ENCODE measurements at regions of chr2 and their contacts with region 1.

Region 1: GRCh38 chr2:10688921-10689807 is 611 bp downstream of the NOL10 start:
- DNase-seq: peak; percentile 21
- H3K4me3 ChIP-seq: peak overlapping the region; percentile 100
- H3K27ac ChIP-seq: peak overlapping the region; percentile 53
- H3K4me1 ChIP-seq: peaks cover 23% of the 10 kb centered on the region
- CTCF ChIP-seq: no peak

Region 2: DNA sequence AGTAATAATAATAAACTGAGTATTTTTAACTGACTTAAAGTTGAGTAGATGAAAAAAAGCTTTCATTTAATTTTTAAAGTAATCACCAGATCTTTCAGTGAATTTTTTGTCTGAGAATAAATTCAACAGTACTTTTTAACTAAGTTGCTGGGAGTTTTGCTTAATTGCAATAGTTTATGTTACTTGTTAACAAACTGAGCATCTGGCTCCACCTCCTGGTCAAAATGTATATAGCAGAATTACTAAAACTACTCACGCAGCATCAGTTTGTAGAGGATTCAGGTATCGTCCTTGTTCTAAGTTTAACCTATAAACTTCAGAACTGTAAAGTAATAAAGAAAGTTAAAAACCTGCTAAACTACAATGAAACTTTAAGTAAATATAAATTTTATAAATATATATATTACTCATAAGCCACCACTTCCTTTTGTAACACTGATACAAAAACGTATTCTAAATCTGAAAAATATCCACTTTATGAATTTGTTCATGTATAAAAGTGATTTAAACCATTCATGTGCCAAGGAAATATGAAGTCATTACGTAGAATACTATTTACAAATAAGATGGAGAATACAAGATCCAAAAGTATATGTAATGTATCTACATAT is 20.7 kb before region 1 on chr2:
- CTCF ChIA-PET with region 1: no interaction called
- POLR2A ChIA-PET with region 1: no interaction called
- intact Hi-C with region 1: no loop called
- DNase-seq: peak; percentile 75
- H3K4me3 ChIP-seq: no peak overlapping the region
- H3K27ac ChIP-seq: no peak overlapping the region
- H3K4me1 ChIP-seq: no peaks in the 10 kb centered on the region
- CTCF ChIP-seq: peak; percentile 92

Region 3: GRCh38 chr2:10812362-10813162 is 123.4 kb after region 1 on chr2 and contains the start of gene PDIA6:
- CTCF ChIA-PET with region 1: no interaction called
- POLR2A ChIA-PET with region 1: interaction called, 3 read pairs
- intact Hi-C with region 1: loop called (anchors 2 kb)
- DNase-seq: peak; percentile 97
- H3K4me3 ChIP-seq: peak within 1 kb of the TSS; percentile 79
- H3K27ac ChIP-seq: peak within 1 kb of the TSS; percentile 70
- H3K4me1 ChIP-seq: peaks cover 46% of the 10 kb centered on the region
- CTCF ChIP-seq: no peak
- total RNA-seq, gene PDIA6: 171 and 192 TPM in 2 replicates

Region 4: GRCh38 chr2:11145350-11145749 is 456.2 kb after region 1 on chr2:
- CTCF ChIA-PET with region 1: no interaction called
- POLR2A ChIA-PET with region 1: no interaction called
- intact Hi-C with region 1: no loop called
- DNase-seq: peak; percentile 34
- H3K4me3 ChIP-seq: no peak overlapping the region
- H3K27ac ChIP-seq: no peak overlapping the region
- H3K4me1 ChIP-seq: peaks cover 7% of the 10 kb centered on the region
- CTCF ChIP-seq: no peak

Region 5: GRCh38 chr2:11203480-11203879 is 514.3 kb after region 1 on chr2:
- CTCF ChIA-PET with region 1: no interaction called
- POLR2A ChIA-PET with region 1: no interaction called
- intact Hi-C with region 1: no loop called
- DNase-seq: no peak
- H3K4me3 ChIP-seq: no peak overlapping the region
- H3K27ac ChIP-seq: no peak overlapping the region
- H3K4me1 ChIP-seq: no peaks in the 10 kb centered on the region
- CTCF ChIP-seq: no peak